ENCODE measurements at regions of chr2 and their contacts with region 1.

Region 1: DNA sequence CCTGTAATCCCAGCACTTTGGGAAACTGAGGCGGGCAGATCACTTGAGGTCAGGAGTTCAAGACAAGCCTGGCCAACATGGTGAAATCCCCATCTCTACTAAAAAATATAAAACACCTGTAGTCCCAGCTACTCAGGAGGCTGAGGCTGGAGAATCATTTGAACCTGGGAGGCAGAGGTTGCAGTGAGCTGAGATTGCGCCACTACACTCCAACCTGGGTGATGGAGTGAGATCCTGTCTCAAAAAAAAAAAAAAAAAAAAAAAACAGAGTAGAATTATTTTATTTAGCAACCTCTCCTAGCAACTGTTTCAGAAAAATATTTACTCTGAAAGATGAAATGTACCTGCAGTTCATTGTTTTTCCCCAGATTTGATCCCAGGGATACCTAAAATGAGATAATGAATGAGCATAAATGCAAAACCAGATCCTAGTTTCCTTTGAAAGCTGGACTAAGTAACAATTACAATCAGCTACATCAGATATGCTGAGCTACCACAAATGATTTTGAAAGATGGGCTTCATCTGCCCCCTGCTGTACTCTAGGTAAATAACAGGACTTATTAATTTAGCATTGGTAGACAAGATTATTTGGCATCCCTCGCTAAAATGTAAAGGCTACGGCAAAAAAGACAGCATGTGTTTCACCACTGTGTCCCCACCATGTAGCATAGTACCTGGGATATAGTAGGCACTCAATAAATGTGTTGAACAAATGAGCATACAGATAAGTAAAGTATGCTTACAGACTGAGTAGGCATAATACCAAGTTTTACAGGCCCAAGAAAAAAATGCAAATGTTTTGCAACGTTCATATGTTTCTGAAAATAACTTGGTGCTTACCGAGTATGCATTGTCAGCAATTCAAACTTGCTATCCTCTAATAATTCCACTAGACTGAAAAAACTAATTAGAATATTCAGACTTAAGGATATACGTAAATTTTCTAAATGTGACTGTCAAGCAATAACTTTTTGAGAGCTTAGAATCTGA is 102.5 kb downstream of the ATL2 start:
- DNase-seq: peak; percentile 79

Region 2: DNA sequence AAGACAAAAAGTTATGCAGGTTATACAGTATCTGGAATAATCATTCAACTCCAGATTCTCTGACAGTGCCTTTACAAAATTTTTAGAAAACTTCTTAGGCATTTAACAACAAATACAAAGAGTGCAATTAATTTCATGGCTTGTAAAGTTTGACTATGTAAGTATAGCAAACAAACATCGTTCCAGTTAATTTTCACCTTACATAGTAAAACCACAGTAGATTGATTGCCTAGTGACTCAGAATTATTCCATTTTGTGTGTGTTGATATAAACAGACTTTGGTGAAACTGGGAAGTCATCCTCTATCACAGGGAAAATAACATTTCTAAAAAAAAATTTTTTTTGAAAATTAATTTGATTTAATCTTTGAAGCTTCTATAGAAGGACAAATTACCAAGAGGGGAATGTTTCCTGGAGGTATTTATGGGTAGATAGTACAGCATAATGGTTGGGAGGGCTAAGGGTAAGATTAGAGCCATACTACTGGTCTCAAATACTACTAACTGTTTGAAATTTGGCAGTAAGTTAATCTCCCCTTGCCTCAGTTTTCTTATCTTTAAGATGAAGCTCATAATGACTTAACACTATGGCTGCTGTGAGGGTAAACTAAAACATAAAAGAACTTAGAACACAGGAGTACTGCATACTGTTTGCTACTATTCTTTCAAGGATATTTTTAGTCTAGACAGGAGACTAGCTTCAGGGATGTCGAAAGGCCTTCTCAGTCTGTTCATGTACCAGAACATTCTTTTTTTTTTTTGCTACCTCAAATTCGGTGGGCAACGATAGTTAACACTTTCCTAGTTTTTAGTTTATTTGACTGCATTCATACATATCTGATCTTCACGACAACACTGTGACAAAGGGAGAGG is 1023.5 kb before region 1 on chr2:
- in situ Hi-C with region 1: no loop called
- DNase-seq: no peak

Region 3: DNA sequence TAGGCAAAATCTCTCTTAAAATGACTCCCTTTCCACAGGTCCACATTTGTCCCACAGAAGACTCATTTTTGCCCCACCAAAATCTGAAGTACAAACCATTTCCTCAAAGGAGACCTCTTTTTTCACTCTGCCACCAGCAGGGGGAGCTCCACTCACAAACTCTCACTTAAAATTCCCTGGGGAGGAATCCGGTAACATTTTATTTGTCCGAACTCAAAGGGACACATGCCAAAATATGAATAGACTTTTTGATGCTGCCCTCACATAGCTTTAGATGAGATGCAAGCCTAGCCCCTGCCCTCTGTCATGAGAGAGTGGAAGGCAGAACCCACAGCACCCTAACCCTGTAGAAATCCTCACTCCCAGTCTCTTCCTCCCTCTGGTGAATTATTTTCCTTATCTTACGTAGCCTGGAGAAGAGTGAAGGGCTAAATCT is 292.4 kb before region 1 on chr2:
- in situ Hi-C with region 1: loop called (anchors 25 kb)
- DNase-seq: peak; percentile 71